ENCODE measurements at regions of chr11 and their contacts with region 1.

Region 1: DNA sequence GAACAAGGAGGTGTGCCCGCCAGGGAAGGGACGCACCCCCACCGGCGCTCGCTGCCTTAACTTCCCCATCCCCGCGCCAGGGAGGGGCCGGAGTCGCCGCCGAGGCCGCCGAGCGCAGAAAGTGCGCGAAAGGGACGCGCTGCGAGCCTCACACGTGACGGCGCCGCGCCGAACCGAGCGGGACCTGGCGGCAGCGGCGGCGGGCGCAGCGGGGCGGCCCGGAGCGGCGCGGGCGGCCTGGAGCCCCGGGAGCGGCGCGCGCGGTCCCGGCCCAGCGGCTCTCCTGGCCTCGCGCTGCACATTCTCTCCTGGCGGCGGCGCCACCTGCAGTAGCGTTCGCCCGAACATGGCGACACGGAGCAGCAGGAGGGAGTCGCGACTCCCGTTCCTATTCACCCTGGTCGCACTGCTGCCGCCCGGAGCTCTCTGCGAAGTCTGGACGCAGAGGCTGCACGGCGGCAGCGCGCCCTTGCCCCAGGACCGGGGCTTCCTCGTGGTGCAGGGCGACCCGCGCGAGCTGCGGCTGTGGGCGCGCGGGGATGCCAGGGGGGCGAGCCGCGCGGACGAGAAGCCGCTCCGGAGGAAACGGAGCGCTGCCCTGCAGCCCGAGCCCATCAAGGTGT is at the start of gene SORL1:
- DNase-seq: no peak
- H3K4me3 ChIP-seq: peak within 1 kb of the TSS; percentile 65 to 90 (median 84)
- H3K27ac ChIP-seq: peak within 1 kb of the TSS; percentile 58 to 80 (median 62)
- H3K4me1 ChIP-seq: peaks cover 9 to 83% (median 12%) of the 10 kb centered on the region in 3 donors
- H3K27me3 ChIP-seq: peaks cover 0 to 15% (median 0%) of the 10 kb centered on the region in 4 donors
- CTCF ChIP-seq: peak; percentile 27 to 71 (median 52)
- POLR2A ChIP-seq: no peak
- total RNA-seq, gene SORL1: 6.8 to 19.9 (median 16.3) TPM

Region 2: DNA sequence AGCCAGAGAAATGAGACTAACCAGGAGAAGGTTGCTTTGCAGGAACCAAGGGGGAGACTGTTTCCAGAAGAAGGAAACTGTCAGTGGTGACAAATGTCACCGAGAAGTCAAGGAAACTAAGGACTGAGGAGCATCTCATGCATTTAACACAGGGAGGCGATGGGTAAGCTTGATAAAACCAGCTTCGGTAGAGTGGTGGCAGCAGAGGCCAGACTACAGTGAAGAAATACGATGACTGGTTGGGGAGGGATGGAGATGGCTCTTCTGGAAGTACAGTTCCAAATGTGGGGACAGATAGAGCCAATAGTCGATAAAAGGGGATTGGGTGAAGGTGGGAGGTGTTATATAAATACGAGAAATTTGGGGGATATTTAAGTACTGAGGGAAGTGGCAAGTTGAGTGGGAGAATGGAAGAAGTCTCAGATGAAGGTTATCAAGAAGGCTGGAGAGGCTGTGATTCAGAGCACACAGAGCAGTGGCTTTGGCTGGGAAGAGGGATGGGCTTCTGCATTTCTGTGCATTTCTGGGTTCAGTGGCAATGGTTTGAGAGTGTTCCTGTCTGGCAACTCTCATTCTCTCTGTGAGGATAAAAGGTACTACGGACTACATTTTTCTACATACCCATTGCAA is 130.4 kb before region 1 on chr11:
- intact Hi-C with region 1: loop called (anchors 10 kb)
- DNase-seq: no peak
- H3K4me3 ChIP-seq: no peak overlapping the region
- H3K27ac ChIP-seq: no peak overlapping the region
- H3K4me1 ChIP-seq: no peaks in the 10 kb centered on the region
- H3K27me3 ChIP-seq: peaks cover 0 to 5% (median 0%) of the 10 kb centered on the region in 4 donors
- CTCF ChIP-seq: peak in 5 of 6 experiments; percentile 35 to 61 (median 49)
- POLR2A ChIP-seq: no peak

Region 3: DNA sequence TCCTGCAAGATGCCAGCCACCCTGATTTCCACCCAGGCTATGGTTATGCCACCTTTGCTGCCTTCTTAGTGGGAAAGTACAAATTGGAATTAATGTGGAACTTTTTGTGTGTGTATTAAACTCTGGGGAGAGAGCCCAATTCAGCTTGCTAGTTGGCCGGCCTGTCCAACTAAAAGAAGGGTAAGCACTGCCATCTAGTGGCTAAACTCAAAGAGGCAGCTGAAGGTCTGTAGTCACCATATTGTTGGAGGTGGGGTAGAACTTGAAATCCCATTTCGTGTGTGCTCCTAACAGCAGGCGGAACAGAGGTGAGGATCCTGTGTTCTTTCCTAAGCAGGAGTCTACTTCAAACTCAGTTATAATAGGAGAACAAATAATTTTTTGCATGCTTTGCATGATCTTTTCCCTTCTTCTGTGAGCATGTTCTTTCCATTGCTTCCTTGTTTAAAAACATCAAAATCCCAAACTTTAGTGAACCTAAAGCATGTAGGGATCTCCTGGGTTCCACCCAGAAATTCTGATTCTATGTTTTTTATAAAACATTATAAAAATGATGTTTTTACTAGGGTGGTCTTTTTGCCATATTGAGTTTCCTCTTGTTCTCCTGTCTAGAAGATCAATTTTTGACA is 139.4 kb after region 1 on chr11:
- intact Hi-C with region 1: loop called (anchors 10 kb)
- DNase-seq: no peak
- H3K4me3 ChIP-seq: no peak overlapping the region
- H3K27ac ChIP-seq: no peak overlapping the region
- H3K4me1 ChIP-seq: peaks cover 0 to 23% (median 9%) of the 10 kb centered on the region in 3 donors
- H3K27me3 ChIP-seq: no peaks in the 10 kb centered on the region
- CTCF ChIP-seq: peak; percentile 72 to 89 (median 87)
- POLR2A ChIP-seq: no peak

Measured in esophagus squamous epithelium (tissue), 5 donors.